ENCODE measurements at regions of chr5 and their contacts with region 1.

Region 1: DNA sequence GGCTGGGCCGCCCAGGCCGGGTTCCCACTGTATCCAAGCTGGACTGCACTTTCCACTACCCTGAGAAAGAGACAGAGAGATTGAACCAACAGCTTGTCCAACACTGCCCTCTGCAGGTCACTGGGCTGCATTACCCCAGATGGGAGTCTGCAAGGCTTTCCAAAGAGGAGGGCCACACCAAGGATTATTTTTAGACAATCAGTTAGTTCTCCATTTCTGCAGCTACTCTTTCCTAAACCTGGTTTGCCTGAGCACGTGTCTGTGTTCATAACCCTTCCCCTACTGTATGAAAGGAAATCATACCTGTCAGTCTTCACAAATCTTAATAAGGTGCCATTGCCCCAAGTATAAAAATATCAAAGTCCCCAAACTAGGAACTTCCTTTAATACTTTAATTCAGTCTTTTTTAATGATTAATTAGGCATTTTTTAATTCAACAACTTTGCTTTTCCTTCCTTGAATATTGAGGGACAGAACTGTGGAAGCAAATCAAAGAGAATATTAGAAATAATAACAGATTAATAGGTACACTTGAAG is 13.4 kb upstream of the FGF1 start:
- DNase-seq: peak; percentile 85
- H3K4me3 ChIP-seq: no peak overlapping the region
- H3K27ac ChIP-seq: peak overlapping the region; percentile 38 to 61 (median 59)
- H3K4me1 ChIP-seq: peaks cover 3 to 21% (median 10%) of the 10 kb centered on the region in 4 donors
- H3K27me3 ChIP-seq: no peaks in the 10 kb centered on the region
- CTCF ChIP-seq: peak; percentile 92 to 97 (median 94)
- EP300 ChIP-seq: no peak
- POLR2A ChIP-seq: no peak

Region 2: GRCh38 chr5:141320225-141321169 is 1378.8 kb before region 1 on chr5 and contains the start of gene TAF7:
- in situ Hi-C with region 1: no loop called
- intact Hi-C with region 1: no loop called
- DNase-seq: peak; percentile 92
- H3K4me3 ChIP-seq: peak within 1 kb of the TSS; percentile 32 to 80 (median 62)
- H3K27ac ChIP-seq: peak within 1 kb of the TSS; percentile 87 to 97 (median 92)
- H3K4me1 ChIP-seq: peaks cover 0 to 12% (median 4%) of the 10 kb centered on the region in 4 donors
- H3K27me3 ChIP-seq: no peaks in the 10 kb centered on the region
- CTCF ChIP-seq: peak; percentile 79 to 86 (median 85)
- EP300 ChIP-seq: no peak
- POLR2A ChIP-seq: peak; percentile 95
- total RNA-seq, gene TAF7: 41.9 to 62.5 (median 50.3) TPM

Region 3: GRCh38 chr5:142151436-142152383 is 547.5 kb before region 1 on chr5:
- in situ Hi-C with region 1: loop called in 1 of 4 experiments (anchors 25 kb)
- intact Hi-C with region 1: no loop called
- DNase-seq: peak; percentile 41
- H3K4me3 ChIP-seq: no peak overlapping the region
- H3K27ac ChIP-seq: no peak overlapping the region
- H3K4me1 ChIP-seq: peaks cover 0 to 3% (median 0%) of the 10 kb centered on the region in 4 donors
- H3K27me3 ChIP-seq: no peaks in the 10 kb centered on the region
- CTCF ChIP-seq: peak; percentile 76 to 88 (median 82)
- EP300 ChIP-seq: no peak
- POLR2A ChIP-seq: no peak

Region 4: GRCh38 chr5:142611154-142611553 is 88.1 kb before region 1 on chr5:
- in situ Hi-C with region 1: loop called in 2 of 4 experiments (anchors 5 kb)
- intact Hi-C with region 1: loop called (anchors 5 kb)
- DNase-seq: peak; percentile 73
- H3K4me3 ChIP-seq: no peak overlapping the region
- H3K27ac ChIP-seq: no peak overlapping the region
- H3K4me1 ChIP-seq: no peaks in the 10 kb centered on the region
- H3K27me3 ChIP-seq: peaks cover 16% of the 10 kb centered on the region
- CTCF ChIP-seq: peak; percentile 76 to 87 (median 83)
- EP300 ChIP-seq: no peak
- POLR2A ChIP-seq: no peak

Region 5: DNA sequence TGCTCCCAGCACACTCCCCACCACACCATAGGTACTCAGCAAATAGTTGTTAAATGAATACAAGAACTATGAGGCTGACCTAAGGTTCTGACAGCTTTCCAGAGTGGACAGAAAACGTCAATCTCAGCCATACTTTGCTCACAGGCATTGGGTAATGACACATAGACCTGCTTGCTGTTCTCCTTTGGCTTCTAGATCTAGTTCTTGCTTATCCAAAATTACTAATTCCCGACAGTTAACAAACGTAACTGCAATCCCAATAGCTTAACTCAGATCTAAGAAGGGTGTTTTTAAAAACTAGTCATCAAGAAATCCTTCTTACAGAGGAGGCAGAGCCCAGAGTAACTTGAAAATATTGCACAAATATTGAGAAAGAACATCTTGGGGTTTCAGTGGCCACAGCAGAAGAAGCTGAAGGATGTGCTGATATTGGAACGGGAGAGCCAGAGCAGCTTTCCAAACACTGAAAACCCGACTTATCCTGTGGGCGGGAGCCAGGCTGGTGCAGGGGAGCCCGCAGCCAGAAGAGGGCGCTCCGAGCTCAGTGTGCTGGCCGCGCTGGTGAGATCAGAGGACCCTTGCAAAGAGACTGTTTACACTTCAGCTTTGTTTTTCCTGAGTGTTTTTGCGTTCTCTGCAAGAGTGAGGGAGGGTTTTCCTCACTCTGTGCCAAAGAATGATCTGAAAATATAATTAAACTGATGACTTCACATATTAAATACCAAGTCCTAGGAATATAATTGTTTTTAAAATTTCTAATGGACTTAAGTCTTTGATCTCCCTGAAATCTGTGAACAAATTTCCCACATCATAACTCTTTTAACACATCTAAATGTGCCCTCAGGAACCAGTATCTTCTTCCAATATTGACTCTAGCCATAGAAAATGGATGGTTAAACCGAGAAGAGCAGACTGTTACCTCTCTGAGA is 43.6 kb before region 1 on chr5:
- in situ Hi-C with region 1: loop called in 1 of 4 experiments (anchors 5 kb)
- intact Hi-C with region 1: loop called (anchors 1 kb)
- DNase-seq: peak; percentile 78
- H3K4me3 ChIP-seq: no peak overlapping the region
- H3K27ac ChIP-seq: peak overlapping the region in 2 of 4 donors; percentile 2 to 45
- H3K4me1 ChIP-seq: no peaks in the 10 kb centered on the region
- H3K27me3 ChIP-seq: no peaks in the 10 kb centered on the region
- CTCF ChIP-seq: peak; percentile 86 to 96 (median 95)
- EP300 ChIP-seq: no peak
- POLR2A ChIP-seq: no peak